CD8-positive, alpha-beta T cell (primary cell): ENCODE measurements at regions of chr4 and their contacts with region 1.

Region 1: GRCh38 chr4:122732329-122733026 is at the start of gene BBS12:
- DNase-seq: peak; percentile 98 to 99 (median 99)
- ATAC-seq: peak; percentile 97
- H3K4me3 ChIP-seq: peak within 1 kb of the TSS; percentile 57 to 94
- H3K4me3 Mint-ChIP-seq: peak within 1 kb of the TSS; percentile 99
- H3K27ac ChIP-seq: peak within 1 kb of the TSS; percentile 81 to 95
- H3K27ac Mint-ChIP-seq: peak within 1 kb of the TSS; percentile 97
- H3K4me1 ChIP-seq: peaks cover 13% of the 10 kb centered on the region
- H3K4me1 Mint-ChIP-seq: peaks cover 18% of the 10 kb centered on the region
- H3K27me3 ChIP-seq: no peaks in the 10 kb centered on the region
- H3K27me3 Mint-ChIP-seq: no peaks in the 10 kb centered on the region
- CTCF ChIP-seq: no peak
- total RNA-seq, gene BBS12: 0.56 to 0.98 TPM

Region 2: GRCh38 chr4:121823505-121824170 is 908.8 kb before region 1 on chr4 and contains the start of gene CCNA2:
- CTCF ChIA-PET with region 1: no interaction called
- POLR2A ChIA-PET with region 1: no interaction called
- intact Hi-C with region 1: loop called in 1 of 2 experiments (anchors 5 kb)
- DNase-seq: peak; percentile 90 to 97 (median 95)
- ATAC-seq: peak; percentile 98
- H3K4me3 ChIP-seq: peak within 1 kb of the TSS; percentile 62 to 74
- H3K4me3 Mint-ChIP-seq: peak within 1 kb of the TSS; percentile 91
- H3K27ac ChIP-seq: peak within 1 kb of the TSS; percentile 64 to 77
- H3K27ac Mint-ChIP-seq: peak within 1 kb of the TSS; percentile 86
- H3K4me1 ChIP-seq: peaks cover 8% of the 10 kb centered on the region
- H3K4me1 Mint-ChIP-seq: peaks cover 13% of the 10 kb centered on the region
- H3K27me3 ChIP-seq: no peaks in the 10 kb centered on the region
- H3K27me3 Mint-ChIP-seq: no peaks in the 10 kb centered on the region
- CTCF ChIP-seq: no peak
- total RNA-seq, gene CCNA2: 0.22 to 0.43 TPM

Region 3: DNA sequence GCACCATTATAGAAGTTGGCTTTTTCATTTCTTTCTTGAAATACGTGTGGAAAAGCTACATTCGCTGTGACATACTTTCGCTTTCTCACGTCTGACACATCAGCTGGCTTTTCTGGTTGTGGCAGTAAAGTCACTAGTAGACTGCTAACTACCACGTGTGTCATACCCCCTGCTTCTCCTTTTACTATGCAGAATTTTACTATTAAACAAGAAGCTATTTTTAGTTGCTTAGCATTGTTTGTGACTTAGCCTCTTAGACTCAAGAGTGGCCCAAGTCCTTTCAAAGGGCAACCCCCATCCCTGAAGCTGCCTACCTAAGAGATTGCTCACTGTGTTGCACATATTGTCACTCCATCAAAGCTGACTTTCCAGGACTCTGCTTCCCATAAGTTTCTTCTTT is 273.9 kb before region 1 on chr4:
- CTCF ChIA-PET with region 1: no interaction called
- POLR2A ChIA-PET with region 1: no interaction called
- intact Hi-C with region 1: loop called in 1 of 2 experiments (anchors 5 kb)
- DNase-seq: peak in 7 of 9 experiments; percentile 6 to 72 (median 25)
- ATAC-seq: peak; percentile 81
- H3K4me3 ChIP-seq: peak overlapping the region; percentile 37 to 38
- H3K4me3 Mint-ChIP-seq: peak overlapping the region; percentile 81
- H3K27ac ChIP-seq: peak overlapping the region in 1 of 2 experiments; percentile 49
- H3K27ac Mint-ChIP-seq: peak overlapping the region; percentile 85
- H3K4me1 ChIP-seq: peaks cover 23% of the 10 kb centered on the region
- H3K4me1 Mint-ChIP-seq: peaks cover 47% of the 10 kb centered on the region
- H3K27me3 ChIP-seq: no peaks in the 10 kb centered on the region
- H3K27me3 Mint-ChIP-seq: no peaks in the 10 kb centered on the region
- CTCF ChIP-seq: no peak

Region 4: DNA sequence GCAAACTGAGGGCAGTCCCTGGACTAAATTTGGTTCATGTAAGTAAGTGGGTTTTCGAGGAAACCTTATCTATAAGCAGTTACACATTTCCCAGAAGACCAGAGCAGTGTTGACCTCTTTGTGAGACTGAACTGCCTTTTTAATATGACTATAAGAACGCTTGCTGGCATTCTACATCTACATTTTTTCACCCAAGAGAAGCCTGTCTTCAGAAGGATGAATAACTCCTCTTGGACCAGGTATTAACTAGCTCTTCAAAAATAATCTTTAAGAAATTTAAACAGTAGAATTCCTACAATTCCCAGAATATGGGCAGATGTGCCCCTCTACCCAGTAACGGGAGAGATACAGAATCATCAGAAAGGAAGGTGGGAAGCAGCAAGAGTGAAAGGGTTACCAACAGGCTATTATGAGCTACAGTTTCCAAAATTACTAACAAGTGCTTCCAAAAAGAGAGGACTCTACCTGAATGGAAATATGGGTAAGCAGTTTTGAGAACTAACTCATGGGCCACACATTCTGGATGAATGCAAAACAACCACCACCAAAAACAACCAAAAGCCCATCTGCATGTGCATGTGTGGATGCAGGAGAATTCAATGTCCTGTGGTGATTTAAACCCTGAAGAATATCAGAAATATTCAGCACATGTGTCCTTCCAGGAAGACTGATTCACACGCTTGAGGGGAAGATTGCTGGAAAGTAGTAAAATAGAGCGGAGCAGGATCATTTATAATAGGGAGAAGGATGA is 17.4 kb after region 1 on chr4:
- CTCF ChIA-PET with region 1: no interaction called
- POLR2A ChIA-PET with region 1: no interaction called
- intact Hi-C with region 1: no loop called
- DNase-seq: no peak
- ATAC-seq: no peak
- H3K4me3 ChIP-seq: no peak overlapping the region
- H3K4me3 Mint-ChIP-seq: no peak overlapping the region
- H3K27ac ChIP-seq: no peak overlapping the region
- H3K27ac Mint-ChIP-seq: no peak overlapping the region
- H3K4me1 ChIP-seq: no peaks in the 10 kb centered on the region
- H3K4me1 Mint-ChIP-seq: no peaks in the 10 kb centered on the region
- H3K27me3 ChIP-seq: no peaks in the 10 kb centered on the region
- H3K27me3 Mint-ChIP-seq: peaks cover 19% of the 10 kb centered on the region
- CTCF ChIP-seq: no peak

Region 5: GRCh38 chr4:122922877-122923511 is 190.5 kb after region 1 on chr4:
- CTCF ChIA-PET with region 1: no interaction called
- POLR2A ChIA-PET with region 1: interaction called, 5 read pairs
- intact Hi-C with region 1: loop called (anchors 1 kb)
- DNase-seq: peak; percentile 72 to 92 (median 89)
- ATAC-seq: peak; percentile 98
- H3K4me3 ChIP-seq: peak overlapping the region; percentile 79 to 87
- H3K4me3 Mint-ChIP-seq: peak overlapping the region; percentile 99
- H3K27ac ChIP-seq: peak overlapping the region; percentile 62 to 74
- H3K27ac Mint-ChIP-seq: peak overlapping the region; percentile 96
- H3K4me1 ChIP-seq: peaks cover 20% of the 10 kb centered on the region
- H3K4me1 Mint-ChIP-seq: peaks cover 17% of the 10 kb centered on the region
- H3K27me3 ChIP-seq: no peaks in the 10 kb centered on the region
- H3K27me3 Mint-ChIP-seq: no peaks in the 10 kb centered on the region
- CTCF ChIP-seq: no peak

Region 6: GRCh38 chr4:124712372-124713184 is 1980.1 kb after region 1 on chr4 and contains the start of gene ANKRD50:
- CTCF ChIA-PET with region 1: no interaction called
- POLR2A ChIA-PET with region 1: no interaction called
- intact Hi-C with region 1: loop called in 1 of 2 experiments (anchors 2 kb)
- DNase-seq: peak; percentile 14 to 82 (median 63)
- ATAC-seq: peak; percentile 81
- H3K4me3 ChIP-seq: peak within 1 kb of the TSS; percentile 54 to 72
- H3K4me3 Mint-ChIP-seq: peak within 1 kb of the TSS; percentile 83
- H3K27ac ChIP-seq: peak within 1 kb of the TSS in 1 of 2 experiments; percentile 42
- H3K27ac Mint-ChIP-seq: peak within 1 kb of the TSS; percentile 75
- H3K4me1 ChIP-seq: peaks cover 9% of the 10 kb centered on the region
- H3K4me1 Mint-ChIP-seq: peaks cover 7% of the 10 kb centered on the region
- H3K27me3 ChIP-seq: no peaks in the 10 kb centered on the region
- H3K27me3 Mint-ChIP-seq: no peaks in the 10 kb centered on the region
- CTCF ChIP-seq: no peak
- total RNA-seq, gene ANKRD50: 0.11 to 0.22 TPM